ENCODE measurements at regions of chr6 and their contacts with region 1.

Region 1: GRCh38 chr6:32127717-32128592 is at the start of gene ATF6B:
- DNase-seq: peak; percentile 100
- ATAC-seq: peak; percentile 93
- H3K4me3 ChIP-seq: peak within 1 kb of the TSS; percentile 95 to 100 (median 99)
- H3K27ac ChIP-seq: peak within 1 kb of the TSS; percentile 81
- H3K4me1 ChIP-seq: peaks cover 33% of the 10 kb centered on the region
- H3K27me3 ChIP-seq: no peaks in the 10 kb centered on the region; a peak in 2 of 5 replicates
- CTCF ChIP-seq: 0 out of 2 replicates have a peak, but pooled peaks have one; percentile 17
- EP300 ChIP-seq: no peak
- POLR2A ChIP-seq: peak; percentile 68 to 69
- RAD21 ChIP-seq: no peak
- total RNA-seq, gene ATF6B: 7.5 and 18.1 TPM in 2 replicates

Region 2: GRCh38 chr6:32113386-32114352 is 14.3 kb before region 1 on chr6:
- CTCF ChIA-PET with region 1: no interaction called
- POLR2A ChIA-PET with region 1: interaction called, 34 read pairs
- in situ Hi-C with region 1: no loop called
- intact Hi-C with region 1: no loop called
- DNase-seq: peak; percentile 80
- ATAC-seq: peak; percentile 67
- H3K4me3 ChIP-seq: no peak overlapping the region
- H3K27ac ChIP-seq: peak overlapping the region; percentile 60
- H3K4me1 ChIP-seq: peaks cover 18% of the 10 kb centered on the region
- H3K27me3 ChIP-seq: peaks cover 0 to 4% of the 10 kb centered on the region in 2 experiments; a peak in 2 of 5 replicates
- CTCF ChIP-seq: peak; percentile 65
- EP300 ChIP-seq: peak in 1 of 2 experiments; percentile 11; a peak in 1 of 4 replicates
- POLR2A ChIP-seq: peak in 1 of 2 experiments; percentile 20; a peak in 1 of 4 replicates
- RAD21 ChIP-seq: no peak

Region 3: GRCh38 chr6:32177788-32178546 is 50.0 kb after region 1 on chr6 and contains the start of gene RNF5:
- CTCF ChIA-PET with region 1: no interaction called
- POLR2A ChIA-PET with region 1: interaction called, 29 read pairs
- in situ Hi-C with region 1: no loop called
- intact Hi-C with region 1: loop called (anchors 1 kb)
- DNase-seq: peak; percentile 100
- ATAC-seq: peak; percentile 90
- H3K4me3 ChIP-seq: peak within 1 kb of the TSS; percentile 96 to 98 (median 98)
- H3K27ac ChIP-seq: peak within 1 kb of the TSS; percentile 97
- H3K4me1 ChIP-seq: peaks cover 54% of the 10 kb centered on the region
- H3K27me3 ChIP-seq: no peaks in the 10 kb centered on the region; a peak in 1 of 5 replicates
- CTCF ChIP-seq: no peak
- EP300 ChIP-seq: peak; percentile 10 to 17; a peak in 1 of 4 replicates
- POLR2A ChIP-seq: peak; percentile 1 to 14; a peak in 1 of 4 replicates
- RAD21 ChIP-seq: no peak
- total RNA-seq, gene RNF5: 98.0 and 107 TPM in 2 replicates

Region 4: DNA sequence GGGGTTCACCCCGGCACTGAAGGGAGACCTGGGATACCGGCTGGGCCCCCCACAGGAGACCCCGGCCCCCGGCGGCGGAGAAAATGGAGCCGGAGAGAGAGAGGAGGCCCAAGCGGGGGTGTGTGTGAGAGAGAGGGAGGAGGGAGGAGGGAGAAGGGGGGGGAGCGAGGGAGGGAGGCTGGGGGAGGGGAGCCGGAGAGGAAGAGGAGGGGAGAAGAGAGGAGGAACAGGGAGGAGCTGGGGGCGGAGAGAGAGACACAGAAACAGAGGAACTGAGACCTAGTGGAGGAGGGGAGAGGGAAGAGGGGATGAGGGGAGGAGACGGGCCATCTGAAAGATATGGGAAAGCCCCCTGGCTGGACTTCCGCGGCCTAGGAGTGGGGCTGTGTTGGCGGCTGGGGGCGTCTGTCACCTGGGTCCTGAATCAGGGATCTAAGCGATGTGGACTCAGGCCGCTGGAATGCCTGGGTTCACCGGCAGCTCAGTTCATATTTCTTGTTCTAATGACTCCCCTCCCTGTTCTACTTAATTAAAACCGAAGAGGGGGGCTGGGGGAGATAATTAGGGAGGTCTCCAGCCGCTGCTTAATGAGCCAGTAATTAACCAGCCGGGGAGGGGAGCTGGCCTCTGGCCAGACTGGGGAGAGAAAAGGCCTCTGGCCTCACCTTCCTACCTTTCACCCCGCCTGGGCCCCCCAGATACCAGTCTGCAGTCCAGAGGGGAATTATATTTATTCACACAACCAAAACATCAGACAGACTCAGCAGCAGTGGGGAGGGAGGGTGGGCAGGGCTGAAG is 62.3 kb after region 1 on chr6 and contains the start of gene PBX2:
- CTCF ChIA-PET with region 1: no interaction called
- POLR2A ChIA-PET with region 1: interaction called, 19 read pairs
- in situ Hi-C with region 1: no loop called
- intact Hi-C with region 1: no loop called
- DNase-seq: peak; percentile 87
- ATAC-seq: peak; percentile 76
- H3K4me3 ChIP-seq: peak within 1 kb of the TSS; percentile 74 to 93 (median 79)
- H3K27ac ChIP-seq: peak within 1 kb of the TSS; percentile 80
- H3K4me1 ChIP-seq: peaks cover 46% of the 10 kb centered on the region
- H3K27me3 ChIP-seq: no peaks in the 10 kb centered on the region; a peak in 1 of 5 replicates
- CTCF ChIP-seq: peak; percentile 27; the same call in 1 of the 2 replicates
- EP300 ChIP-seq: 0 out of 4 replicates have a peak, but pooled peaks of 1 of the 2 experiments have one; percentile 23
- POLR2A ChIP-seq: peak in 1 of 2 experiments; percentile 45; a peak in 1 of 4 replicates
- RAD21 ChIP-seq: no peak
- total RNA-seq, gene PBX2: 42.3 and 45.2 TPM in 2 replicates

Region 5: GRCh38 chr6:32568561-32568960 is 440.6 kb after region 1 on chr6:
- CTCF ChIA-PET with region 1: no interaction called
- POLR2A ChIA-PET with region 1: no interaction called
- in situ Hi-C with region 1: no loop called
- intact Hi-C with region 1: no loop called
- DNase-seq: no peak
- ATAC-seq: no peak
- H3K4me3 ChIP-seq: no peak overlapping the region
- H3K27ac ChIP-seq: no peak overlapping the region
- H3K4me1 ChIP-seq: no peaks in the 10 kb centered on the region
- H3K27me3 ChIP-seq: no peaks in the 10 kb centered on the region
- CTCF ChIP-seq: no peak
- EP300 ChIP-seq: no peak
- POLR2A ChIP-seq: no peak
- RAD21 ChIP-seq: no peak